ENCODE measurements at regions of chr2 and their contacts with region 1.

Region 1: GRCh38 chr2:9142551-9143263 is 63.9 kb upstream of the ASAP2 start:
- DNase-seq: peak; percentile 80 to 99
- H3K4me3 ChIP-seq: peak overlapping the region in 3 of 4 experiments; percentile 14 to 49 (median 29); a peak in 3 of 8 replicates
- H3K27ac ChIP-seq: no peak overlapping the region
- H3K4me1 ChIP-seq: peaks cover 4 to 7% (median 4%) of the 10 kb centered on the region in 4 experiments; a peak in 6 of 7 replicates
- H3K27me3 ChIP-seq: peaks cover 0 to 32% (median 18%) of the 10 kb centered on the region in 4 experiments; a peak in 5 of 7 replicates
- CTCF ChIP-seq: peak in 2 of 3 experiments; percentile 92 to 95; a peak in 3 of 4 replicates
- EP300 ChIP-seq: no peak
- POLR2A ChIP-seq: no peak
- RAD21 ChIP-seq: peak; percentile 97 to 98

Region 2: GRCh38 chr2:8986327-8986976 is 156.3 kb before region 1 on chr2:
- CTCF ChIA-PET with region 1: interaction called, 10 read pairs
- POLR2A ChIA-PET with region 1: no interaction called
- DNase-seq: peak in 1 of 2 experiments; percentile 71
- H3K4me3 ChIP-seq: no peak overlapping the region
- H3K27ac ChIP-seq: no peak overlapping the region
- H3K4me1 ChIP-seq: peaks cover 0 to 4% (median 1%) of the 10 kb centered on the region in 4 experiments; a peak in 1 of 7 replicates
- H3K27me3 ChIP-seq: no peaks in the 10 kb centered on the region
- CTCF ChIP-seq: peak; percentile 74 to 80 (median 77)
- EP300 ChIP-seq: no peak
- POLR2A ChIP-seq: no peak
- RAD21 ChIP-seq: peak; percentile 76 to 85

Region 3: DNA sequence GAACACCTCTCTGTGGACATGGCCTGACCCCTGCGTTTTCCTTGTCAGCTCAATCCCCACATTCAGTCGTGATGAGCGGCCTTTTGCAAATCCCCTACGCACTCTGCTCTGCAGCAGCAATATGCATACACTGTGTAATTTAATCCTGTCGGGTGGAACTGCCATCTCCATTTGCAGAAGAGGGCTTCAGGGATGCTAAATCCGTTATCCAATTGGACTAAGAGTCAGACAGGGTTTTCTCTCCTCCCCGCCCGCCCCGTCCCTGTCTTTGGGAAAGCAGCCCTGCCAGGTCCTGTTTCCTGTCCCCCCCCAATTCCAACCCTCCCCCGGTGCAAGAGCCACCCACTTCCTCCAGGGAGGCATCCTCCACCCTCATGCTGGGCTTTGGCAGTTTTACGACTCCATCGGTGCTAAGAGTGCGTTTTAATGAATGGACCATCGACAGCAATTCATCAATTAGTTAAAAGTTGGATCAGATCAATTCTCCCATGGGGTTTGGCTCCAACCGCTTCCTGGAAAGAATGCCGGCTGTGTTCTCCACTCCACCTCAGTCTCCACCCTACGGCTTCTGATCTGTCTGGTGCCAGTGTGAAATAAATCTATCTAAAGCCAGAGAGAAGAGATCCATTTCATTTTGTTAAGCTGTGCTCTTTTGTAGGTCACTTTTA is 10.4 kb after region 1 on chr2:
- CTCF ChIA-PET with region 1: interaction called, 59 read pairs
- POLR2A ChIA-PET with region 1: no interaction called
- DNase-seq: no peak
- H3K4me3 ChIP-seq: no peak overlapping the region
- H3K27ac ChIP-seq: no peak overlapping the region
- H3K4me1 ChIP-seq: peaks cover 0 to 2% (median under 1%) of the 10 kb centered on the region in 4 experiments; a peak in 4 of 7 replicates
- H3K27me3 ChIP-seq: no peaks in the 10 kb centered on the region
- CTCF ChIP-seq: no peak
- EP300 ChIP-seq: no peak
- POLR2A ChIP-seq: no peak
- RAD21 ChIP-seq: no peak

Region 4: GRCh38 chr2:9205963-9206948 is 63.5 kb after region 1 on chr2 and contains the start of gene ASAP2:
- CTCF ChIA-PET with region 1: interaction called, 11 read pairs
- POLR2A ChIA-PET with region 1: interaction called, 7 read pairs
- DNase-seq: peak in 1 of 2 experiments; percentile 80
- H3K4me3 ChIP-seq: peak within 1 kb of the TSS; percentile 67 to 95 (median 80)
- H3K27ac ChIP-seq: no peak within 1 kb of the TSS
- H3K4me1 ChIP-seq: peaks cover 0 to 6% (median 3%) of the 10 kb centered on the region in 4 experiments; a peak in 4 of 7 replicates
- H3K27me3 ChIP-seq: peaks cover 0 to 6% (median 3%) of the 10 kb centered on the region in 4 experiments; a peak in 3 of 7 replicates
- CTCF ChIP-seq: peak; percentile 56 to 72 (median 63)
- EP300 ChIP-seq: no peak
- POLR2A ChIP-seq: peak; percentile 56 to 59
- RAD21 ChIP-seq: peak; percentile 31 to 63; a peak in 2 of 4 replicates
- total RNA-seq, gene ASAP2: 16.6 and 18.7 TPM in 2 replicates

Region 5: DNA sequence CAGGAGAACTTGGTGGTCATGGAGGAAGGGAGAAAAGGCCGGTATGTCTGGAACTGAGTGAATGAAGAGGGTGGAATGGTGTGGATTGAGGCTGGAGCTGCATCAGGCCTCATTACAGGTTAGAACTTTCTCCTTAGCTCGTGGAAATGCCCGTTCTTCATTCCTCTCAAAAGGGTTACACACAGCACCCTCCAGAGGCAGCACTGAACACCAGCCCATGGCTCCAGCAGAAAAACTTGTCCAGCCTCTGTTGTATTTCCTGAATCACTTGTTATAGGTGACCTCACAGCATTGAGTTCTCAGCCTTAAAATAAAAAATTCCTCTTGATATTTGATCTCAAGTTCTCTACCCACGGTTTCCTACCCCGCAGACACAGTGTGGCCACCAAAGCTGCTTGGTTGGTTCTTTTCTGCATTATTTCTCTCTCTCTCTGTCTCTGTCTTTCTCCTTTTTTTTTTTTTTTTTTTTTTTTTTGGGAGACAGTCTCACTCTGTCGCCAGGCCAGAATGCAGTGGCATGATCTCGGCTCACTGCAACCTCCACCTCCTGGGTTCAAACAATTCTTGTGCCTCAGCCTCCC is 191.0 kb after region 1 on chr2:
- CTCF ChIA-PET with region 1: interaction called, 14 read pairs
- POLR2A ChIA-PET with region 1: interaction called, 3 read pairs
- DNase-seq: peak in 1 of 2 experiments; percentile 21
- H3K4me3 ChIP-seq: no peak overlapping the region
- H3K27ac ChIP-seq: no peak overlapping the region
- H3K4me1 ChIP-seq: no peaks in the 10 kb centered on the region; a peak in 1 of 7 replicates
- H3K27me3 ChIP-seq: no peaks in the 10 kb centered on the region
- CTCF ChIP-seq: peak; percentile 65 to 74 (median 66)
- EP300 ChIP-seq: no peak
- POLR2A ChIP-seq: no peak
- RAD21 ChIP-seq: peak; percentile 79 to 83

Region 6: DNA sequence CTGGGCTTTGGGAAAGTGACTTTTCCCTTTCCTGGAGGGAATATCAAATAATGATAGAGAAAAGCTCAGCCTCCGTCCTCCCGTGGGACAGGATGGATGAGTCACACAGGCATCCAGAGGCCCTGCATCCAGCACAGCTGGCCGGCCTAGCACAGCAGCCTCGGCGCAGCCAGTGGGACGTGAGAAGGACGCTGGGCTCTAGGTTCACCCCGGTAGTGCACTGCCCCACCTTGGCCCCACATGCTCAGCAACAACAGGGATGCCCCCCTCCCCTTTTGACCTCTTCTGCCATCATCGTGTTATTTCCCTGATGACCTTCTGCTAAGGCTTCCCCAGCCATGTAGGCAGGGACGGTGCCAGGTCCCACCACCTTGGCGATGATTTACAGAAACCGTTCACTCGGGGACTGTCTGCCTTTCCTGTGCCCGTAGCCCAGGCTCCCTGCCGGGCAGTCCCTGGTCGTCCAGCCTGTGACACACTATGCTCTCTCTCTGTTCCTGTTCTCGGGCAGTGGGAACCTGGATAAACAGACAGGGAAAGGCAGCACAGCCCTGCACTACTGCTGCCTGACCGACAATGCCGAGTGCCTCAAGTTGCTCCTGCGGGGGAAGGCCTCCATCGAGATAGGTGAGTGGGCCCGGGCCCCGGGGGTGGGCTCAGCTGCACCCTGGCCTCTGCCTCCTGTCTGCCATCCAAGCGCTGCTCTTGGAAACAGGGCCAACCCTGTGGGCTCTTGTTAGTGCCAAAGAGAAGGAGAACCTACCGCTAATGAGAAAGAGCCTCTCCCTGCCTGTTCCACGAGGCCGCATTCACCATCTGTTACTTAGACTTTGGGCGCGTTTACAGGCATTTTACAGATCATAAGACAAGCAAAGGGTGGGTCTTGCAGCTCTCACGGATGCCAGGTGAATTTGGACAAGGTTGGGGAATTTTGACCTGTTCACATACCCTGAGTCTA is 236.0 kb after region 1 on chr2:
- CTCF ChIA-PET with region 1: interaction called, 106 read pairs
- POLR2A ChIA-PET with region 1: no interaction called
- DNase-seq: no peak
- H3K4me3 ChIP-seq: no peak overlapping the region
- H3K27ac ChIP-seq: no peak overlapping the region; the same call in 1 of the 2 replicates
- H3K4me1 ChIP-seq: peaks cover 0 to 9% (median 4%) of the 10 kb centered on the region in 4 experiments; a peak in 4 of 7 replicates
- H3K27me3 ChIP-seq: no peaks in the 10 kb centered on the region
- CTCF ChIP-seq: no peak
- EP300 ChIP-seq: no peak
- POLR2A ChIP-seq: no peak
- RAD21 ChIP-seq: no peak